ENCODE measurements at regions of chr11 and their contacts with region 1.

Region 1: GRCh38 chr11:2151500-2152257 is 9.3 kb downstream of the INS start:
- DNase-seq: peak; percentile 74
- H3K4me3 ChIP-seq: no peak overlapping the region
- H3K27ac ChIP-seq: peak overlapping the region in 1 of 2 donors; percentile 21
- H3K4me1 ChIP-seq: no peaks in the 10 kb centered on the region
- H3K27me3 ChIP-seq: peaks cover 8% of the 10 kb centered on the region
- CTCF ChIP-seq: peak; percentile 75 to 93 (median 86)
- POLR2A ChIP-seq: no peak

Region 2: DNA sequence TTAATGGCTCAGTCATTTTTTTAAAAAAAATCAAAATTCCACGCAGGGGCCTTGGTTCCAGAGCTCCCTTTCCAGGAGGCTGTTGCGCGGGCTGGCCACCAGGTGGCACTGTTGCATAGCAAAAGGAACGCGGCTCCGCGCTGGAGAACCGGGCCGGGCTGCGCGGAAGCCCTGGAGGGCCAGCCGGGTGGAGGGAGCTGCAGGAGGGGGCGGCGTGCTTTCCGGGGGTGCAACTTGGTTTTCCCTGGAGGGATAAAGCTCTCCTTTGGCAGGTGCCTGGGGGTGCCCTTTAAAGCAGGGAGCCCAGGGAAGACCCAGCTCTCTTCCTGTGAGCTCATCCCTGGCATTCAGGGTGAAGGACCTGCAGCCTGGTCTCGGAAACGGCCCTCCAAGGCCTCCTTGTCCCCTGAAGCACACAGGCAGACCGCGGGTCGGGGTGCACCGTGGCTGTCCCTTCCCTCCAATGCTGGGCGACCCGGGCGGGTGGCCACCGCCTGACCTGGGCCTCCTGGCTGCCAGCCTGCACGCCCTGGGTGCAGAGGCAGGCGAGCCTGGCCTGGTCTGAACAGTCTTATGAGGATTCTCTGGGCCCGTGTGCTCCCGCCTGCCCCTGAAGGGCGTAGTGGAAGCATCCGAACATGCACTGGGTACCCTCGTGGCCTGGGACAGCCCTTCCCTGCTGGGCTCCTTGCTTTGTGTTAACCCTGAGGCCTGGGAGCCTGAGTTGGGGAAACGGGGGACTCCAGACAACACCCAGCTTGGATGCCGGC is 498.7 kb before region 1 on chr11:
- intact Hi-C with region 1: loop called (anchors 10 kb)
- DNase-seq: peak; percentile 54
- H3K4me3 ChIP-seq: no peak overlapping the region
- H3K27ac ChIP-seq: no peak overlapping the region
- H3K4me1 ChIP-seq: no peaks in the 10 kb centered on the region
- H3K27me3 ChIP-seq: no peaks in the 10 kb centered on the region
- CTCF ChIP-seq: peak; percentile 96 to 98 (median 97)
- POLR2A ChIP-seq: no peak

Region 3: GRCh38 chr11:1694064-1694845 is 457.4 kb before region 1 on chr11:
- intact Hi-C with region 1: loop called (anchors 2 kb)
- DNase-seq: peak; percentile 72
- H3K4me3 ChIP-seq: peak overlapping the region in 1 of 2 donors; percentile 26
- H3K27ac ChIP-seq: no peak overlapping the region
- H3K4me1 ChIP-seq: peaks cover 7% of the 10 kb centered on the region
- H3K27me3 ChIP-seq: no peaks in the 10 kb centered on the region
- CTCF ChIP-seq: peak; percentile 87 to 96 (median 92)
- POLR2A ChIP-seq: no peak

Region 4: DNA sequence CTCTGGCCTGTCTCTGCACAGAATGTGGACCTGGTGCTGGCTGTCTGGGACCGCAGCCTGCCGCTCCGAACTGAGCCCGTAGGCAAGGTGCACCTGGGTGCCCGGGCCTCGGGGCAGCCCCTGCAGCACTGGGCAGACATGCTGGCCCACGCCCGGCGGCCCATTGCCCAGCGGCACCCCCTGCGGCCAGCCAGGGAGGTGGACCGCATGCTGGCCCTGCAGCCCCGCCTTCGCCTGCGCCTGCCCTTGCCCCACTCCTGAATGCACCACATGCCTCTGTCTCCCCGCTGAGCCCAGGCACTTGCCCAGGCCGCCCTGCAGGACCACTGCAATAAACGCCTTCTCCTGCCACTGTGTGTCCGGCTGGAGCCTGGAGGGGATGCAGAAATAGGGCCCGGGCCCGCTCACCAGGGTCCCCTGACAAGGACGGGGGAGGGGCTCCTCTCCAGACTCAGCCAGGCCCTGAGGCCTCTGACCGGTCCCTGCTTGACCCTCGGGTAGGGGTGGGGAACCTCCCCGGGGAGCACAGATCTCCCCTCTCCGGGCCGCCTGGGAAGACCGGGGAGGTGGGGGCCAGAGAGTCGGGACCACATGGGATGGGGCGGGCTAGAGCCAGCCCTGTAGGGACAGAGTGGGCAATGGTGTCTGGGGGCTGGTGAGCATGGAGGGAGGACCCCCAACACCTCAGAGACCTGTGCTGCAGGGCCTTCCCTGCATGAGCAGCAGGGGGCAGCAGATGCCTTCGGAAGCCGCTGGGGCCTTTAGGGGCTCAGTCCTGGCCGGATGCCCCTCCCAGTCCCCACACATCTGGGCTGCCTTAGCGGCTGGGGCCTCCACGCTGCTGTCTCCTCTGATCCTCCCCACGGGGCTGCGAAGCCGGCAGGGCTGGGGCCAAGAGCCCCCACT is 314.3 kb before region 1 on chr11:
- intact Hi-C with region 1: loop called (anchors 5 kb)
- DNase-seq: no peak
- H3K4me3 ChIP-seq: no peak overlapping the region
- H3K27ac ChIP-seq: no peak overlapping the region
- H3K4me1 ChIP-seq: peaks cover 5% of the 10 kb centered on the region
- H3K27me3 ChIP-seq: no peaks in the 10 kb centered on the region
- CTCF ChIP-seq: peak; percentile 54 to 84 (median 64)
- POLR2A ChIP-seq: no peak

Region 5: GRCh38 chr11:1882519-1883238 is 269.0 kb before region 1 on chr11:
- intact Hi-C with region 1: loop called (anchors 5 kb)
- DNase-seq: peak; percentile 63
- H3K4me3 ChIP-seq: no peak overlapping the region
- H3K27ac ChIP-seq: no peak overlapping the region
- H3K4me1 ChIP-seq: no peaks in the 10 kb centered on the region
- H3K27me3 ChIP-seq: no peaks in the 10 kb centered on the region
- CTCF ChIP-seq: peak; percentile 77 to 92 (median 89)
- POLR2A ChIP-seq: no peak

Region 6: DNA sequence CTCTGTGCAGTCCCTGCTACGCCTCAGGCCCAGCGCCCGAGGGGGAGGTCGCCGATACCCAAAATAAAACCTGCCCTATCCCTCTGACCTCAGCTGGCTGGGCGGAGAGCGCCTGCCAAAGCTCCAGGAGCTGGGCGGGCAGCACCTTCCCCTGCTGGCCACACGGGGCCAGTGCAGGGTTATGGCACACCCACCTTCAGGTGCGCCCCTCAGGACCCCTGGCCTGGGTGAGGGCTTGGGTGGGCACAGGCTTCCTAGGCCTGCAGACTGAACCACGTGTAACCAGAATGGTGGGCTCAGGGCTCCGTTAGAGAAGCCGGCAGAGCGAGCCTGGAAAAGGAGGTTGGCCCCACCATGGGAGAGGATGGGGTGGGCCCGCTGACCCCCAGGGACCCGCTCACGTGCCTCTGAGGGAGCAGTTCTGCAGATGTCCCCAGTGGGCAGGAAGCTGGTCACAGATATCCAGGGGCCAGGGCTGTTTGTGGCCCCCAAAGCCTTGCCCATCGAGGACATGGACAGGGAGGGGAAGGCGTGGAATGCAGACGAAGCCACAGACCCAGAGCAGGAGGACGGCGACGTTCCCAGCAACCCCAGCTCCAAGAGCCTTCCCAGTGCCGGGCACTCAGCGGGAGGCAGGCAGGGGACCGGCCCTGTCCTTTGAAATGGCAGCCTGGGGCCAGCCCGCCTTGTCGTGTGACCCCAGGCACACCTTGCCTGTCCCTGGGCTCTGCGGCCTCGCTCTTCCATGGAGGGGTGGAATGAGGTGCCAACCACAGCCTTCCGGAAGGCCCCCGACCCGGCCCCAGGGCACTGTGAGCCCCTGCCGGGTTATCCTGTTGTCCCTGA is 233.8 kb before region 1 on chr11:
- intact Hi-C with region 1: loop called (anchors 10 kb)
- DNase-seq: no peak
- H3K4me3 ChIP-seq: no peak overlapping the region
- H3K27ac ChIP-seq: no peak overlapping the region
- H3K4me1 ChIP-seq: no peaks in the 10 kb centered on the region
- H3K27me3 ChIP-seq: no peaks in the 10 kb centered on the region
- CTCF ChIP-seq: peak in 1 of 4 experiments; percentile 5
- POLR2A ChIP-seq: no peak

Region 7: GRCh38 chr11:2109541-2110019 is 42.1 kb before region 1 on chr11:
- intact Hi-C with region 1: no loop called
- DNase-seq: no peak
- H3K4me3 ChIP-seq: no peak overlapping the region
- H3K27ac ChIP-seq: no peak overlapping the region
- H3K4me1 ChIP-seq: no peaks in the 10 kb centered on the region
- H3K27me3 ChIP-seq: no peaks in the 10 kb centered on the region
- CTCF ChIP-seq: no peak
- POLR2A ChIP-seq: no peak